ENCODE measurements at regions of chr6 and their contacts with region 1.

Region 1: DNA sequence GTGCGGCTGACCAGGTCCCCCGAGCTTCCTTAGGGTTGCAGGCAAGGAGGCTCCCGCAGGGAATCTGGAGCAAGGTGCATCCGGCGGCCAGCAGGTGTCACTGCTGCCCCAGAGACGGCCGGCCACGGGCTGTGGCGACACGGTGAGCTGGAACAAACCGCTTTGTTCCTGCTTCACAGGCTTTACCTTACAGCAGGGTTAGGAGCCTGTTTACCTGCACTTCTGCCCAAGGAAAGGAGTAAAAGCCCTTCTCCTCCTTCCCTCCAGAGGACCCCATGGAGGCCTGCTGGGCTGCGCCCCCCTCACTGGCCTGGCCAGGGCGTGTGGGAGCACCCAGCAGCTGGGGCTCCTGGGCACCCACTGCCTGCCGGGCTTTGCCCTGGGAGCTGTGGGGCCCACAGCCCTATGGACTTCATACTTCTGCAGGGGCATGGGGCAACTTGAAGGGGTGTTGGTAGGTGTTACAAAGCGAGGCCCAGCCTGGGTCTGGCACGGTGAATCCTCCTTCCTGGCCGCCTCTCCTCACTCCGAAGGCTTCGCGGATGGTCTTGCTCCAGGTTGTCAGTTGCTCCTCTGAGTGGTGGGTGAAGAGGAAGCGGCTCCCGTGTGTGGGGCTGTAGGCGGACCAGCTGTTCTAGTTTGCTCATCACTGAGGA is 88.4 kb downstream of the CDC5L start:
- DNase-seq: peak; percentile 85
- ATAC-seq: peak; percentile 77

Region 2: DNA sequence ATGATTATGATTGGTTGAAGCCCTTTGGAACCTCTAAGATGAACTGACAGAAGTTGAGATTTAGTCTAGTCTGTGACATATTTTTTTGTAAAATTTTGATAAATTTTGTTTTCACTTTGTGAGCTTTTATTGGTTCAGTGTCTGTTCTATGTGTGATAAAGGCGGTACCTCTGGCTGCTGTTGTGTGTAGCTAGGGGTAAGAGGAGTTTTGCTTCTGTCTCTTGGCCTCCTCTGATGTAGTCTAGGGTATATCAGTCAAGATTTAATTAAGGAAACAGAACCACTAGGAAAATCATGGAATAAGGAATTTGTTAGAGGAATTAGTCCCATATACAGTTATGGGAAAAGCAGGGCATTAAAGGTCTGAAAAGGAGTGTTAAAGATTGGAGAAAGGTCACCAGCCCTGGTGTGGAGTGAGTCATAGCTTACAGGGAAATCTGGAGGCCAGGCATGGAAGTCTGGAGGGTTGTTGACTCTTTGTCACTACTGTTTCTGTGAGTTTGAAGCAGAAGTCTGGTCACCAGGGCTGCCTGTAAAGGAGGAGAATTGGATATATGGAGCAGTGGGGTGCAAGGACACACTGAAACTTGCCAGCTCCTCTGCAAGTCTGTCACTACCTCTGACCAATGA is 59.9 kb before region 1 on chr6:
- intact Hi-C with region 1: no loop called
- DNase-seq: no peak
- ATAC-seq: no peak

Region 3: DNA sequence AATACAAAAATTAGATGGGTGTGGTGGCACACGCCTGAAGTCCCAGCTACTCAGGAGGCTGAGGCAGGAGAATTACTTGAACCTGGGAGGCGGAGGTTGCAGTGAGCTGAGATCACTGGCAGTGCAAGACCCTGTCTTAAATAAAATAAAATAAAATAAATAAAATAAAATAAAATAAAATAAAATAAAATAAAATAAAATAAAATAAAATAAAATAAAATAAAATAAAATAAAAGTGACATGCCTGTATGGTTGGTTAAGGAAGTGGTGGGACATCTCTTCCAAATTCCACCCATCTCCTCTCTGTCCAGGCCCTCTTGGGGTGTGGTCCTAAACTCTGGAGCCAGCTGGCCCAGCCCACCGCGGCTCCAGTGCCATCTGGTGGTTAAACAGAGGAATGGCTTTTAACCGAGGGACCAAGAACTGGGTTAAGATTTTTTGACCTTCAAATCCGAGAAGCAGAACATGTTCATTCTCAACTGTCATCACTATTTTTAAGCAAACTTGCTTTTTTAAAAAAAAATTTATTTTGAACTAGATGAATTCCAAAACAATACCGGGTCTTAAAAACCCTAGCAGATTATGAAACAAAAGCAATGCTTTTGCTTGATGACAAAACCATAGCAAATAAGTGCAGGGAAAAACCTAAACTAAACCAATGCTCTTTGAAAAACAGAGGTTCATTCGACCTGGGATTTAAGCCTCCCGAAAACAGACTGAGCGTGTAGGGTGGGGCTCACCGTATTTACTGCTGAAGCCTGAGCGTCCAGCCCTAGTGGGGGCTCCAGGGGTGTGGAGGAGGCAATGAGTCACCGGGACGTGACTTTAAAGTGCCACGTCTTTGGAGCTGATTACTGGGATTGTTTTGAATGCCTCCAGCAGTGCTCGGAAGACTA is 19.6 kb before region 1 on chr6:
- intact Hi-C with region 1: no loop called
- DNase-seq: peak; percentile 83
- ATAC-seq: peak; percentile 68

Region 4: GRCh38 chr6:44618371-44618770 is 142.5 kb after region 1 on chr6:
- intact Hi-C with region 1: no loop called
- DNase-seq: no peak
- ATAC-seq: no peak

Region 5: GRCh38 chr6:44645276-44645675 is 169.4 kb after region 1 on chr6:
- intact Hi-C with region 1: loop called (anchors 2 kb)
- DNase-seq: no peak
- ATAC-seq: no peak